CD4-positive, alpha-beta T cell (primary cell): ENCODE measurements at regions of chr19 and their contacts with region 1.

Region 1: DNA sequence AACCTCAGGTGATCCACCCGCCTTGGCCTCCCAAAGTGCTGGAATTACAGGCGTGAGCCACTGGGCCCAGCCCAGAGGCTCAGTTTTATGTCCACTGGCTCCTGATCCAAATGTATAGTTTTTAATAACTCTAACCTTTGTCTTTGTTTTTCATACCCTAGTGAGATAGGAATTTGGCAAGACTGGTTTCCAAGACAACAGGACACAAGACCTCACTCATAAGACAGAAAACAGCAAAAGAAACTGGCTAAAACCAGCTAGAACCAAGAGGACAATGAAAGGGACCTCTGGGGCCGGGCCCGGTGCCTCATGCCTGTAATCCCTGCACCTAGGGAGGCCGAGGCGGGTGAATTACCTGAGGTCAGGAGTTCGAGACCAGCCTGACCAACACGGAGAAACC is 27.6 kb downstream of the CPT1C start:
- DNase-seq: no peak
- ATAC-seq: no peak
- H3K4me3 ChIP-seq: no peak overlapping the region
- H3K4me3 Mint-ChIP-seq: peak overlapping the region; percentile 58
- H3K27ac ChIP-seq: no peak overlapping the region
- H3K27ac Mint-ChIP-seq: peak overlapping the region; percentile 79
- H3K4me1 ChIP-seq: peaks cover 13% of the 10 kb centered on the region
- H3K4me1 Mint-ChIP-seq: peaks cover 13% of the 10 kb centered on the region
- H3K27me3 ChIP-seq: no peaks in the 10 kb centered on the region
- H3K27me3 Mint-ChIP-seq: no peaks in the 10 kb centered on the region
- CTCF ChIP-seq: no peak

Region 2: DNA sequence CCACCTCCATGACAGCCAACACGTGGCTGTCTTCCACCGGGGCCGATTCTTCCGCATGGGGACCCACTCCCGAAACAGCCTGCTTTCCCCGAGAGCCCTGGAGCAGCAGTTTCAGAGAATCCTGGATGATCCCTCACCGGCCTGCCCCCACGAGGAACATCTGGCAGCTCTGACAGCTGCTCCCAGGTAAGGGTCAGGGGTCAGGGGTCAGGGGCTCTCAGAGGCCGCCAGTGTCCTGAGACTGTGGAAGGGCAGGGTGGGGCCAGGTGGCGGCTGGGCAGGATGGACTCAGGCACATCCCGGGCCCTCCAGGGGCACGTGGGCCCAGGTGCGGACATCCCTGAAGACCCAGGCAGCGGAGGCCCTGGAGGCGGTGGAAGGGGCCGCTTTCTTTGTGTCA is 12.6 kb before region 1 on chr19:
- CTCF ChIA-PET with region 1: no interaction called
- POLR2A ChIA-PET with region 1: no interaction called
- intact Hi-C with region 1: no loop called
- DNase-seq: no peak
- ATAC-seq: no peak
- H3K4me3 ChIP-seq: no peak overlapping the region
- H3K4me3 Mint-ChIP-seq: no peak overlapping the region
- H3K27ac ChIP-seq: no peak overlapping the region
- H3K27ac Mint-ChIP-seq: no peak overlapping the region
- H3K4me1 ChIP-seq: no peaks in the 10 kb centered on the region
- H3K4me1 Mint-ChIP-seq: no peaks in the 10 kb centered on the region
- H3K27me3 ChIP-seq: peaks cover 0 to 4% of the 10 kb centered on the region in 2 experiments
- H3K27me3 Mint-ChIP-seq: peaks cover 7% of the 10 kb centered on the region
- CTCF ChIP-seq: no peak

Region 3: DNA sequence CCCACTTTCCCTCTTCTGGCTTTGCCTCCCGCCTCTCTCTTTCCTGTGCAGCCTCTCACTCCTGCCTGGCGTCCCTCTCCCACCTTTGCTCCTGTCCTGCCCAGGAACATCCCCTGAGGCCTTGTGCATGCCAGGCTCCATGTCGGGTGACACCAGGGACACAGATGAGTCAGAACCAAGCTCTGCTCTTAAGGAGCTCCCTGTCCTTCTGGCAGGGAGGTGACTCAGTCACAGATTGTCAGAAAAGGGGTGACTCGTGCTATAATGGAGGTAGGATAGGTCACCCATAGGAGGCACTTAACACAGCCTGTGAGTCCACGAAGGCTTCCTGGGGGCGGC is 74.9 kb after region 1 on chr19:
- CTCF ChIA-PET with region 1: no interaction called
- POLR2A ChIA-PET with region 1: no interaction called
- intact Hi-C with region 1: no loop called
- DNase-seq: no peak
- ATAC-seq: no peak
- H3K4me3 ChIP-seq: no peak overlapping the region
- H3K4me3 Mint-ChIP-seq: no peak overlapping the region
- H3K27ac ChIP-seq: no peak overlapping the region
- H3K27ac Mint-ChIP-seq: no peak overlapping the region
- H3K4me1 ChIP-seq: no peaks in the 10 kb centered on the region
- H3K4me1 Mint-ChIP-seq: no peaks in the 10 kb centered on the region
- H3K27me3 ChIP-seq: no peaks in the 10 kb centered on the region
- H3K27me3 Mint-ChIP-seq: no peaks in the 10 kb centered on the region
- CTCF ChIP-seq: no peak

Region 4: DNA sequence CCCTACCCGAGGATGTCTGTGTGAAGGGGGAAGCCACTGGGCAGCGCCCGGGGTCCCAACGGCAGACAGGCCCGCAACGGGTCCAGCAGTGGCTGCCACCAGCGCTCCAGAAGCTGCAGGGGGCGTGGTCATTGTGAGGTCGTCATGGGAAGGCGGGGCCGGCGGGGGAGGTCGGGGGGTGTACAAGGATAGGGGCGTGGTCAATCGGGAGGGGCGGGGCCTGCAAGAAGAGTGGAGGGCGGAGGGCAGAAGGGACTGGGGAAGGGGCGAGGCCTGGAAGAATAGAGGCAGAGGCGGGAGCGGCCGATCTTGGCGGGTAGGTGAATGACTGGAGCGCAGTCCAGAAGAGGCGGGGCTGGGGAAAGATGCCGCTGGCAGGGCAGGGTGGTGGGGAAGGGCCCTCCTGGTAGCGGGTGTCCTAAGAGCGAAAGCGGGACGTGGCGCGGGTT is 90.2 kb after region 1 on chr19:
- CTCF ChIA-PET with region 1: interaction called, 8 read pairs
- POLR2A ChIA-PET with region 1: interaction called, 13 read pairs
- intact Hi-C with region 1: loop called in 1 of 2 experiments (anchors 5 kb)
- DNase-seq: peak; percentile 82 to 94 (median 87)
- ATAC-seq: peak; percentile 52
- H3K4me3 ChIP-seq: peak overlapping the region; percentile 79
- H3K4me3 Mint-ChIP-seq: peak overlapping the region; percentile 91
- H3K27ac ChIP-seq: peak overlapping the region; percentile 29 to 59
- H3K27ac Mint-ChIP-seq: peak overlapping the region; percentile 81
- H3K4me1 ChIP-seq: peaks cover 35% of the 10 kb centered on the region
- H3K4me1 Mint-ChIP-seq: peaks cover 37% of the 10 kb centered on the region
- H3K27me3 ChIP-seq: no peaks in the 10 kb centered on the region
- H3K27me3 Mint-ChIP-seq: no peaks in the 10 kb centered on the region
- CTCF ChIP-seq: no peak